Common myeloid progenitor, CD34-positive (primary cell): ENCODE measurements at regions of chr9 and their contacts with region 1.

Region 1: DNA sequence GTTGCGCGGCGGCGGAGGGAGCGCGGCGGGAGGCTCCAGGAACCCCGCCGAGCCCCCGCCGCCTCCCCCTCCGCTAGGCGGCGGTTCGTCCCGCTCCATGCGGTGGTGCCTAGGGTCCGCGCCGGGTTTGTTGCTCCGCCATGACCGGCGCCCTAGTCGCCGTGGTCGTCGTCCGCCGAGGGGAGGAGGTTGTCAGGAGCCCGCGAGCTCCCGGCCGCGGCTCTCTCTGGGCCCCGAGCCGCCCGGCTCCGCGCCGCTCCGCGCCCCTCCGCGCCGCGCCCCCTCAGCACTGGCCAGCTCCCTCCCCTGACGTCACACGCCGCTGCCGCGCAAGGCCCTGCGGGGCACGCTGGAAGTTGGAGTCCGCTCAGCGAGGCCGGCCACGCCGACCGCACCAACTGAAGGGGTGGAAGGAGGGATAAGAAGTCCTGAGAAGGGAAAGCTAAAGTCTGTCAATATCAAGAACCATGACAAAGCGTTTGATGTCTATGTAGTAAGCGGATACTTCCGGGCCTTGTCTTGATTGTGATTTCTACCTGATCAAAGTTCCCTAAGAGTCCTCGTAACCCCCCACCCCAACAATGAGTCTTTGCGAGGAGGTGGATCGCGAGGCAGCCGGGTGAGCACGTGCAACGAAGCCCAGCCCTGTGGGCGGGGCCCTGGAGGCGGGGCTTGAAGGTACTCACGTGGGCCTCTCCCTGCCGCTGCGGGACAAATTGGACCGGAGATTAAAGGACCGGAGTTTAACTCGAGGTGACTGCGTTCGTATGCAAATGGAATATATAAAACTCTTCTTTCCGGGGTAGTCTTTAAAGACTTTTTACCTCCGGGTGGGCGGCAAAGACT is at the start of gene NR6A1:
- DNase-seq: peak; percentile 96 to 98 (median 98)
- H3K4me3 ChIP-seq: peak within 1 kb of the TSS; percentile 85 to 98 (median 92)
- H3K27ac ChIP-seq: peak within 1 kb of the TSS; percentile 94 to 97
- H3K4me1 ChIP-seq: peaks cover 13 to 57% (median 34%) of the 10 kb centered on the region in 4 experiments
- H3K27me3 ChIP-seq: peaks cover 0 to 5% (median 0%) of the 10 kb centered on the region in 5 experiments

Region 2: DNA sequence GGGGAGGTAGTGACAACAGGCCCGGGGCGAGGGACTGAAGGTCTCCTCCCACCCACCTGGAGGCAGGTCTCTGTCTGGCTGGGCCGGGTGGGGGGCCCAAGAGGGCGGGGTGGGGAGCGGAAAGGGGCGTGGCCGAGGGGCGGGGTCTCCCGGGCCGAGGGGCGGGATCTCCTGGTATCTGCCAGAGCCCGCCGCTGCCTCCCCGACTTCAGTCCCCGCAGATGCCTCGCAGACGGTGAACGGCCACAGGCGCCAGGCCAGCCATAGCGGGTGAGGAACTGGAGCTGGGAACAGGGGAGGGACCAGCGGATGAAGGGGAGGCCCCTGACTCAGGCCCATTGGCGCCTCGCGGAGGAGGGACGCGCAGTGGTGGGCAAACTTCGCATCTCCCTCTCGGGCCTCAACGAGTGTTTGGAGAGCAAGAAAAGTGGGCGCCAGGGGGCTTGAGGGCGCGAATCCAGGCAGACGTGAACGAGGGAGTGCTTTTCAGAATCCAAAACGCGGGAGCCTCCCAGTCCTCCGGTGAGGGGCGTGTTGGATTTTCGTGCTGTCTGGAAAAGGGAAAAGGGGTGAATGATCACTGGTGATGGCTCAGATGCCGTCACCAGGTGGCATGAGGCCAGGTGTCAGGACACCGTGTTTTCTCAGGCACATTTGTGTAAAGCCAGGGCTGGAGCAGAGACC is 320.9 kb before region 1 on chr9 and contains the start of gene ADGRD2:
- CTCF ChIA-PET with region 1: no interaction called
- POLR2A ChIA-PET with region 1: no interaction called
- DNase-seq: peak; percentile 38 to 76 (median 64)
- H3K4me3 ChIP-seq: peak within 1 kb of the TSS in 5 of 7 experiments; percentile 8 to 56 (median 37)
- H3K27ac ChIP-seq: no peak within 1 kb of the TSS
- H3K4me1 ChIP-seq: peaks cover 0 to 20% (median 10%) of the 10 kb centered on the region in 4 experiments
- H3K27me3 ChIP-seq: peaks cover 0 to 49% (median 19%) of the 10 kb centered on the region in 5 experiments

Region 3: GRCh38 chr9:124754289-124754688 is 17.0 kb before region 1 on chr9:
- CTCF ChIA-PET with region 1: interaction called, 13 read pairs
- POLR2A ChIA-PET with region 1: no interaction called
- DNase-seq: no peak
- H3K4me3 ChIP-seq: no peak overlapping the region
- H3K27ac ChIP-seq: no peak overlapping the region
- H3K4me1 ChIP-seq: peaks cover 22 to 44% (median 34%) of the 10 kb centered on the region in 4 experiments
- H3K27me3 ChIP-seq: no peaks in the 10 kb centered on the region

Region 4: GRCh38 chr9:124800306-124801259 is 29.3 kb after region 1 on chr9:
- CTCF ChIA-PET with region 1: interaction called, 83 read pairs
- POLR2A ChIA-PET with region 1: interaction called, 3 read pairs
- DNase-seq: peak; percentile 55 to 79 (median 64)
- H3K4me3 ChIP-seq: peak overlapping the region in 2 of 7 experiments; percentile 8 to 58
- H3K27ac ChIP-seq: no peak overlapping the region
- H3K4me1 ChIP-seq: peaks cover 0 to 51% (median 27%) of the 10 kb centered on the region in 4 experiments
- H3K27me3 ChIP-seq: no peaks in the 10 kb centered on the region

Region 5: DNA sequence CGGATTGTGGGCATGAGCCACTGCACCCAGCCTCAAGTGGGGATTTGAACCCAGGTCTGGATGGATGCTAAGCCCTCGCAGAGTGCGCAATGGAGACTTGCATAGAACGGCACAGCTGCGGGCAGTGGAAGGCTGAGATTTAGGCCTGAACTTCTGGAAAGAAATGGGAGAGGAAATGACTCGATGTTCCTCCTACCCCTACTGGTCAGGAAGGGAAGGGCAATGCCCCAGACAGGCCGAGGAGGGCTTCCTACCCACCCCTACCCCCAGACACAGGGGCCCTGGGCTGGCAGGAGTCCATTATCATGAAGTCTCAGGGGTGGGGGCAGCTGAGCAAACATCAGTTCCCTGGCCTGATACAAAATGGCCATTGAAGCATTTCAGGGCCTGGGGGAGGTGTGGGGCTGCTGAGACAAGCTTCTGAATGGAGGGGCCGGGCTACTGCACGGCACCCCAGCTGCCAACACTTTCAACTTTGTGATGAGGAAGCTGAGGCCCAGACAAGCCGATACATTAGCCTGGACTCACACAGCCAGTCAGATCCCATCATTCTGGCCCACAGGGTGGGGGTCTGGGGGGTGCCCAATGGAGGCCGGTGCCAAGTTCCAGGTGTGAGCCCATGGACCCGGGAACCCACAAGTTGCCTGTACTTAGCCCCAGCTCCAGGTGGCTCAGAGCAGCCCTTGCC is 68.5 kb after region 1 on chr9:
- CTCF ChIA-PET with region 1: interaction called, 547 read pairs
- POLR2A ChIA-PET with region 1: no interaction called
- DNase-seq: peak in 2 of 3 donors; percentile 43 to 52
- H3K4me3 ChIP-seq: no peak overlapping the region
- H3K27ac ChIP-seq: no peak overlapping the region
- H3K4me1 ChIP-seq: peaks cover 0 to 8% (median 8%) of the 10 kb centered on the region in 4 experiments
- H3K27me3 ChIP-seq: no peaks in the 10 kb centered on the region

Region 6: DNA sequence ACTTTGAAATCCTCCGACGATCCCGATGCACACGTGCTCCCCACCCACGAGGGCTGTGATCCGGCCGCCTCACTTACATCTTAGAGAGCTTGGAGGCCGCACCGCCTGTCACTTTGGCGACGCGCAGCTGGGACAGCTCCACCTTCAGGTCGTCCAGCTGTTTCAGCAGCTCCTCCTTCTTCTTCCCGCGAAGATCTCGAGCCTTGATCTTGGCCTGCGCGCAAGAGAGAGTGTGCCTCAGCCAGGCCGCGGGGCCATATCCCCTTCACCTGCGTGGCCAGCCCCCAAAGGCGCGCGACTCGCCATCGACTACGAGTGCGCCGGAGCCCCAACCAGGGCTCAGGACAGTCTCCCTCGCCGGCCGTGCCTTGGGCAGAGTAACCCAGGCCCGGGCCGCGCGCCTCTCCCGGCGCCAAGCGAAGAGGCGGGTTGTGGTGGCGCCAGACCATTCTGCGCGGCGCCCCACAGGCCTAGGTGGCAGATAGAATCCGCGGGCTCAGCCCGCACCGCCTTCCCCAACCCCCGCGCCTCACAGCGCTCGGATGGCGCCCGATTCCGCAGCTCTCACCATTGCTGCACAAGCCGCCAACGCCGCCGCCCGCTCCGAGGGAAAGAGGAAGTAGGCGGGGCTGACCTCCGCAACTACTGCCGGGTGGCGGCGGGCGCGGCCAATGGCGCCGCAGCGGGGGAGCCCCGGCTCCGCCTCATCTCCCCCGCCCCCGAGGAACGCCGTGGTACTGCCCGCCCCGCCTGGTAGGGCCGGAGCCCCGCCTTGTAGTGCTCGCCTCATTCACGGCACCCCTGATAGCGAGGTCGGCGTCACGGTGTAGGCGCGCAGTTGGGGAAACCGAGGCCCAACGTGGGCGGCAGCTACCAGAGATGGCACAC is 90.3 kb after region 1 on chr9 and contains the starts of genes ARPC5L and RPL35:
- CTCF ChIA-PET with region 1: interaction called, 547 read pairs
- POLR2A ChIA-PET with region 1: interaction called, 5 read pairs
- DNase-seq: peak; percentile 95 to 98 (median 98)
- H3K4me3 ChIP-seq: peak within 1 kb of the TSS; percentile 78 to 94 (median 84)
- H3K27ac ChIP-seq: peak within 1 kb of the TSS; percentile 91 to 96
- H3K4me1 ChIP-seq: peaks cover 11 to 35% (median 26%) of the 10 kb centered on the region in 4 experiments
- H3K27me3 ChIP-seq: no peaks in the 10 kb centered on the region

Region 7: GRCh38 chr9:124894741-124895170 is 123.5 kb after region 1 on chr9:
- CTCF ChIA-PET with region 1: interaction called, 30 read pairs
- POLR2A ChIA-PET with region 1: no interaction called
- DNase-seq: peak; percentile 75 to 88 (median 87)
- H3K4me3 ChIP-seq: no peak overlapping the region
- H3K27ac ChIP-seq: no peak overlapping the region
- H3K4me1 ChIP-seq: no peaks in the 10 kb centered on the region
- H3K27me3 ChIP-seq: no peaks in the 10 kb centered on the region